ENCODE measurements at regions of chr11 and their contacts with region 1.

Region 1: GRCh38 chr11:60345489-60345888 is 18.4 kb downstream of the MS4A6E start:
- DNase-seq: peak; percentile 54 to 77 (median 66)
- H3K4me3 ChIP-seq: no peak overlapping the region
- H3K27ac ChIP-seq: no peak overlapping the region
- H3K4me1 ChIP-seq: peaks cover 0 to 4% (median 0%) of the 10 kb centered on the region in 4 experiments
- H3K27me3 ChIP-seq: no peaks in the 10 kb centered on the region

Region 2: GRCh38 chr11:60334005-60334620 is 11.4 kb before region 1 on chr11:
- CTCF ChIA-PET with region 1: interaction called, 24 read pairs
- POLR2A ChIA-PET with region 1: no interaction called
- DNase-seq: peak; percentile 85 to 91 (median 86)
- H3K4me3 ChIP-seq: no peak overlapping the region
- H3K27ac ChIP-seq: no peak overlapping the region
- H3K4me1 ChIP-seq: peaks cover 4 to 17% (median 7%) of the 10 kb centered on the region in 4 experiments
- H3K27me3 ChIP-seq: no peaks in the 10 kb centered on the region

Region 3: DNA sequence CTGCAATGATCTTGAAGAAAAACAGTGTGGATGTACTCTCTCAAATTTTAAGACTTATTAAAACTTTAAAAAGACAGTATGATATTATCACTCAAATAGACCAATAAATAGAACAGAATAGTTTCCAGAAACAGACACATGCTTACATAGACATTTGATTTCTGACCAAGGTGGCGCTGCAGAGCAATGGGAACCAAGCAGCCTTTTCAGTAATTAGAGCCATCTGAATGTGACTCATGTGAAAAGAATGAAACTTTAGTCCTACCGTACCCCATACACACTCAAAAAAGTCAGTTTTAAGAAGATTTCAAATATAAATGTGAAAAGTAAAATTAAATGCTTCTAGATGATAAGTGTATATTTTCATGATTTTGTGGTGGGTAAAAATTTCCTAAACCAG is 279.8 kb after region 1 on chr11:
- CTCF ChIA-PET with region 1: interaction called, 21 read pairs
- POLR2A ChIA-PET with region 1: interaction called, 3 read pairs
- DNase-seq: peak in 1 of 3 donors; percentile 15
- H3K4me3 ChIP-seq: no peak overlapping the region
- H3K27ac ChIP-seq: no peak overlapping the region
- H3K4me1 ChIP-seq: no peaks in the 10 kb centered on the region
- H3K27me3 ChIP-seq: no peaks in the 10 kb centered on the region

Measured in common myeloid progenitor, CD34-positive (primary cell).